Tibial artery (tissue), 4 donors: ENCODE measurements at regions of chr14 and their contacts with region 1.

Region 1: DNA sequence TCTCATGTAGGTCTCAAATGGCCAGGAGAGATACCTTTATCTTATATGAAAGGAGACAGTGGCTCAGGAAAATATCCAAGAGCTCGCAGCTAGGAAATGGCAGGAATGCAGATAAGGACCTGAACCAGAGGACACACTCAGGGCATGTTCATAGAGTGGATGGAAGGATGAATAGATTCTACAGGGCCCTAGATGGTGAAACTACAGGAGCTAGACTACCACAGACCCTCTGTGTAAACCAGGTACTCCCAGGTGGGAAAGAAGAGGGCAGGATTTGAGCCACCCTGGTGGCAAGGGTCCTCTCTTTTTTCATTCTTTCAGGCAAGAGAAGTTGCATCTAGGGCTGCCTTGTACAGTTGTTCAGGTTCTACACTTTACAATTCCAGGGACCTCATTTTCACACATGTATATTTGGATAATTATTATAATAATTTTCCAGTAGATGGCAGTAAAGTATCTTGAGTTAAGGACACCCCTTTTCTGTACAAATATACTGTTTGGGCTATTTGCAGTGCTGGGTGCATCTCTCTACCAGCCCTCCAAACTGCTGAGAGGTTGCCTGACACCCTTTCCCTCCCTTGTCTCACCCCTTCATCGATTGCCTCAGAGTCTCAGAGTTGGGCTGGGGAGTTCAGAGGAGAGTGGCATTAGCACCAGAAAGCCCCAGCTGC is 10.5 kb upstream of the ZDHHC22 start:
- DNase-seq: no peak
- H3K4me3 ChIP-seq: no peak overlapping the region
- H3K27ac ChIP-seq: no peak overlapping the region
- H3K4me1 ChIP-seq: peaks cover 0 to 15% (median 0%) of the 10 kb centered on the region in 4 donors
- H3K27me3 ChIP-seq: peaks cover 0 to 33% of the 10 kb centered on the region in 2 donors
- CTCF ChIP-seq: no peak

Region 2: GRCh38 chr14:77133720-77134338 is 18.2 kb before region 1 on chr14:
- intact Hi-C with region 1: no loop called
- DNase-seq: peak in 1 of 2 donors; percentile 59
- H3K4me3 ChIP-seq: no peak overlapping the region
- H3K27ac ChIP-seq: no peak overlapping the region
- H3K4me1 ChIP-seq: peaks cover 0 to 5% (median 0%) of the 10 kb centered on the region in 4 donors
- H3K27me3 ChIP-seq: peaks cover 0 to 76% of the 10 kb centered on the region in 2 donors
- CTCF ChIP-seq: no peak

Region 3: GRCh38 chr14:77314043-77314442 is 162.0 kb after region 1 on chr14:
- intact Hi-C with region 1: loop called (anchors 10 kb)
- DNase-seq: no peak
- H3K4me3 ChIP-seq: no peak overlapping the region
- H3K27ac ChIP-seq: no peak overlapping the region
- H3K4me1 ChIP-seq: peaks cover 0 to 35% (median 2%) of the 10 kb centered on the region in 4 donors
- H3K27me3 ChIP-seq: no peaks in the 10 kb centered on the region
- CTCF ChIP-seq: no peak